Posterior cingulate gyrus (tissue), 11 donors: ENCODE measurements at regions of chr9 and their contacts with region 1.

Region 1: GRCh38 chr9:76445976-76446375 is 13.0 kb upstream of the GCNT1 start:
- DNase-seq: no peak

Region 2: DNA sequence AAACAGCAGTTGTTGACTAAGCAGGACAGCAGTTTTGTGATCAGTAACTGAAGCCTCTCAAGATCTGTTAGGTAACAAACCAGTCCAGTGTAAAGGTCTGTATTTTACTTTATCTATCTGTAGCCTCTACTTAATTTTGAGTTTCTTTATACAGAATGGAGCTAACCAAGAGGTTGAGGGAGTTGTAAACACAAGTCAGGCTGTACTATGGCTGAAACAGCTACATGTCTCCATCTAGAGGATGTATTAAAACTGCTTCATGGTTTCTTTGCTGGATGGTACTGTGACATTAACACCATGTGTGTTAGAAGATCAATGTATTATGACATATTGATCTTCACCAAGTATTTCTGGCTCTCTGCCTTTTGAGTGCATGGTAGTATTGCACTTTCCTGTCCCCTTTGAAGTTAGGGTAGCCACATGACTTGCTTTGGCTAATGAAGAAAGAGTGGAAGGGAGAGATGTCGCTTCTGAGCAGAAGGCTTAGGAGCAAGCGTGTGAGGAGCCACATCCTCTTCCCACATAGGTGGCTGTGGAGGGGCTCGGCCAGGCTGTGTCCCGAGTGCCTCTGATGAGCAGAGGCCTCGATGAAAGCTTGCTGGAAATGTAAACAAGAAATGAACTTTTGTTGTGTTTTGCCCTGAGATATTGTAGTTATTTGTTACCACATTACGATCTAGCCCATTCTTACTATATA is 212.7 kb after region 1 on chr9:
- intact Hi-C with region 1: loop called (anchors 5 kb)
- DNase-seq: no peak

Region 3: DNA sequence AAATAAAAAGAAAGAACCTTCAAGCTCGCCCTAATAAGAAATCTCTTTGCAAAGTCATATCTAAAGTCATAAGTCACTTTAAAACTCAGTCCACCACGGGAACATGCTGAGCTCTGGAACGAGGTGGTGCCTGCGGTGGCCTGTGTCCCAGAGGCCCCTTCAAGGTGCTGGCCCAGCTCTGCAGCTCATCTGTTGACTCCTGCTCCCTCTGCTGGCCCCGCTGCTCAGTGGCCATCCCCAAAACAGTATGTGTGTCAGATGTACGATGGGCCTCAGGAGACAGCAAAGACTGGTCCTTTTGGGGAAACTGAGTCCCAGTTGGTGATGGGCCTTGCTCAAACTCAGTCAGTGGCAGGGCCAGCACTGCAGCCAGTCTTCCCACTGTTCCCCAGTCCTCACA is 550.7 kb after region 1 on chr9:
- intact Hi-C with region 1: loop called (anchors 5 kb)
- DNase-seq: peak in 8 of 10 donors; percentile 25 to 92 (median 60)

Region 4: DNA sequence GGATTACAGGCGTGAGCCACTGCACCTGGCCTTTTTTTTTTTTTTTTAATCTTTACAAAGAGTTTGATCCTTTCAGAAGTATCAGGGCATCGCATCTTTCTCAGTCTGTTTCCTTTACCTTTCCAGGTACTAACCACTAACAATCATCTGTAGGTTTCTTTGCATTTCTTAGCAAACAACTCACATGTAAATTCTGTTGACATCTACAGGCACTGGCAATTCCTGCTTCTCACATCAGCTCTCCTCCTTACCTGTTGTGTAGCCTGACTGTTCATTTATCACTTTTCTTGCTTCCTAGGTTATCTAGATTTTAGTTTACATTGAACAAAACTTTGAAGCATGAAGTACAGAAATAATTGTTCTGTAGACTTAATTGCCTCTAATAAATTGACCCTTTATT is 703.9 kb after region 1 on chr9:
- intact Hi-C with region 1: loop called (anchors 2 kb)
- DNase-seq: no peak